Posterior cingulate gyrus (tissue), 11 donors: ENCODE measurements at regions of chr6 and their contacts with region 1.

Region 1: GRCh38 chr6:134063966-134064445 is 11.6 kb upstream of the SLC2A12 start:
- DNase-seq: peak in 9 of 10 donors; percentile 36 to 94 (median 71)

Region 2: DNA sequence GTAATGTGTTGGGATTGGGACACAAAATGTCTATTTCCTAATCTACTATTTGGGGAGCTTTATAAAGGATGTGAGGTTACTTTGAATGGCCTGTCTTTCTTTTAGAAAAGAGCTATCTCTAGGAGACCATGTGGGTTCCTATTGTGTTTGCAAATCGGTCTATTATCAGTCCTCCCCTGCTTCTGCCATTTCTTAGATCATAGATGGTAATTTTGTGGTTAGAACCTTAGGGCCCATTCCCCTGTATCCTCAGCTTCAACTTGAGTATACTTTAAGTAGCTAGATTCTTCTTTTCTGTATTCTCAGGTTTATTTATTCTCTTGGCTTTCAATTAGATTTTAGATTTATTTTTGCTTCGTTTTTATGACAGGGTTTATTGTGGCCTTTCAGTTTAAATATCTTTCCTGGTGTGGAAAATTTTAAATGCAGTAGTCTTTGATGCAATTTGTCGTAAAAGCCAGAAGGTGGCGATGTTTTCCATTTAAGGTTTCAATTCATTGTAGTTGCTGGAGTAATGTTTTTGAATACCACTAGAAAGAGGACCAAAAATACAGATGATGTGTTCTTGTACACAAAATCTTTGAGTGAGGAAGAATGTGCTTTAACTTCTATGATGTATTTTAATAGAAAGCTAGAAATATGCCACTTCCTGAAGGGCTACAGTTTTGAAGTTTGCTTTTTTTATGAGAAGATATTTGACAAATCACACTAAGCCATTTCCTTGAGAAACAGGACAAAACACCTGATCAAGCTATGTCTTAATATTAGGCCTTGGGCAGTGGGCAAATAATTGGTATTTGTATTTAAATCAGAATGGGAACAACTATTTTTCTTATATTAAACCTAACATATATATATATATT is 90.7 kb before region 1 on chr6:
- intact Hi-C with region 1: loop called (anchors 1 kb)
- DNase-seq: no peak

Region 3: DNA sequence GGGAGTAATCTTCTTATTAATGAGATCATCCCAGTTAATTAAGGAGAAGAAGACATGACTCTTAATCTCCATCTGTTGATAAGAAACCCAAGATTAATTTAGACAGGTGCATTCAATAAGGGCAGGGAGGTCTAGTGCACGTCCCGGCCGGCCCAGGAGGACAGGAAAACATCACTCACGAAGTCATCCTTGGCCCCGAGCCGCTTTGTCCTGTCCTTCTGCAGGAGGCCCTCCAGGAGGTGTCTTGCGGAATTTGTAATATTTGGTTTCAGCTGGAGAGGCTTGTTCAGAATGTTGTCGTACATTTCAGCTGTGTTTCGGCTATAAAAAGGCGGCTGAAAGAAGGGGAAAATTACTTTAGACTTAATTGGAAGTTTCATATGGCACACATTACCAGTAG is 106.8 kb after region 1 on chr6:
- intact Hi-C with region 1: no loop called
- DNase-seq: peak in 2 of 10 donors; percentile 38 to 68